ENCODE measurements at regions of chr6 and their contacts with region 1.

Region 1: GRCh38 chr6:24855395-24856245 is 56.9 kb upstream of the ARMH2 start:
- DNase-seq: peak; percentile 85
- H3K4me3 Mint-ChIP-seq: peak overlapping the region; percentile 36
- H3K27ac Mint-ChIP-seq: peak overlapping the region; percentile 95
- H3K4me1 Mint-ChIP-seq: peaks cover 56% of the 10 kb centered on the region
- H3K27me3 Mint-ChIP-seq: no peaks in the 10 kb centered on the region

Region 2: GRCh38 chr6:24844061-24844460 is 11.6 kb before region 1 on chr6:
- CTCF ChIA-PET with region 1: interaction called, 10 read pairs
- intact Hi-C with region 1: no loop called
- DNase-seq: no peak
- H3K4me3 Mint-ChIP-seq: no peak overlapping the region
- H3K27ac Mint-ChIP-seq: no peak overlapping the region
- H3K4me1 Mint-ChIP-seq: peaks cover 72% of the 10 kb centered on the region
- H3K27me3 Mint-ChIP-seq: no peaks in the 10 kb centered on the region

Region 3: DNA sequence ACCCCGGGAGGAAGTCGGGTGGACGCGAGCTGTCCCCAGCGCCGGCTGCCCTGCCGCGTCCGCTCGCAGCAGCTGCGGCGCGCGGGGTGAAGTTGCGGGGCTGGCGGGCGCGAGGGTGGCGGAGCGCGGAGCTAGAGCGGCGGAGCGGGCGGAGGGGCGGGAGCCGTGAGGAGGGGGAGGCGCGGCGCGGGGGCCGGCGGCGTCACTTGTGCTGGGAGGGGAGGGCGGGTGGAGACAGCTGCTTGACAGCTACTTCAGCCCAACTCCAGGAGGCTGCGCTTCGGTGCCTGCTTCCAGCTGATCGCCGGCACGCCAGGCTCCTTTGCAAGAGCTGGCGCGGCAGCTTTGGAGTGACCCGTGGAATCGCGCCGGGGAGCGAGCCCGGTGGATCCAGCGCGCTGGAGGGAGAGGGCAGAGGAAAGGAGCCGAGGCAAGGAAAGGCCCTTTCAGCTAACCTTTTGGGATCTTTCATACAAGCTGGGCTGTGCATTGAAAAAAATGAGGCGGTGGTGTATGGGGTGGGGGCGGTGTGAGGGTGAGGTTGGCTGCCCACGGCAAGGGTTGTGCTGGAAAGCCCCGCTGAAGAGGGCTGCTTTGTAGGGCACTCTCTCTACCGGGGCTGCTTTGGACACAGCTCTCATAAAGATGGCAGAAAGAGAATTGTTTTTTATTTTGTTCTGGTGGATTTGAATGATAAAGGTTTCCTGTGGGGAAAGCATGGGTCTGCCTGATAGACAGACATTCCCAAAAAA is 55.5 kb after region 1 on chr6:
- CTCF ChIA-PET with region 1: interaction called, 58 read pairs
- intact Hi-C with region 1: loop called (anchors 1 kb)
- DNase-seq: peak; percentile 70
- H3K4me3 Mint-ChIP-seq: peak overlapping the region; percentile 92
- H3K27ac Mint-ChIP-seq: peak overlapping the region; percentile 96
- H3K4me1 Mint-ChIP-seq: peaks cover 76% of the 10 kb centered on the region
- H3K27me3 Mint-ChIP-seq: no peaks in the 10 kb centered on the region

Region 4: DNA sequence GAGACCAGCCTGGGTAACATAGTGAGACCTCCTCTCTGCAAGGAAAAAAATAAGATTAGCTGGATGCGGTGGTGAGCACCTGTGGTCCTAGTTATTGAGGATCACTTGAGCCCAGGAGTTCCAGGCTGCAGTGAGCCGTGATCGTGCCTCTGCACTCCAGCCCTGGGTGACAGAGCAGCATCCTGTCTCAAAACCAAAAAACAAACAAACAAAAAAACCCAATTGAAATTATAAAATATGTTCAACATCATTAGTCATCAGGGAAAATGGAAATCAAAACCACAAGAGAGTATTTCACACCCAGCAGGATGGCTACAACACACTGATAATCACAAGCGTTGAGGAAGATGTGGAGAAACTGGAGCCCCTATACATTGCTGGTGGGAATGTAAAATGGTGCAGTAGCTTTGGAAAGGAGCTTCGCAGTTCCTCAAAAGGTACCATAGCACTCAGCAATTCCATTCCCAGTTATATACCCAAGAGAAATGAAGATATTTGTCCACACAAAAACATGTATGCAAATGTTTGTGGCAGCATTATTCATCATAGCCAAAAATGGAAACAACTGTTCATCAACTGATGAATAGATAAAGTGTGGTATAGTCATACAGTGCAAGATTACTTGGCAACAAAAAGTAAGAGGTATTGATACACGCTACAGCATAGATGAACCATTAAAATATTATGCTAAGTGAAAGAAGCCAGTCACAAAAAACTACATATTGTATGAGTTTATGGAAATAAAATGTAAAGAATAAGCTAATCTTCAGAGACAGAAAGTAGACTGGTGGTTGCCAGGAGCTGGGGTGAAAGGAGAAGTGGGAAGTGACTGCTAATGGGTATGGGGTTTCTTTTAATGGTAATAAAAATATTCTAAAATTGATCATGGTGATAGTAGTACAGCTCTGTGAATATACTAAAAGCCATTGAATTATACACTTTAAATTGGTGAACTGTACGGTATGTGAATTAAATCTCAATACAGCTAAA is 118.9 kb after region 1 on chr6:
- CTCF ChIA-PET with region 1: interaction called, 5 read pairs
- intact Hi-C with region 1: loop called (anchors 1 kb)
- DNase-seq: peak; percentile 59
- H3K4me3 Mint-ChIP-seq: peak overlapping the region; percentile 16
- H3K27ac Mint-ChIP-seq: peak overlapping the region; percentile 92
- H3K4me1 Mint-ChIP-seq: peaks cover 58% of the 10 kb centered on the region
- H3K27me3 Mint-ChIP-seq: no peaks in the 10 kb centered on the region

Region 5: DNA sequence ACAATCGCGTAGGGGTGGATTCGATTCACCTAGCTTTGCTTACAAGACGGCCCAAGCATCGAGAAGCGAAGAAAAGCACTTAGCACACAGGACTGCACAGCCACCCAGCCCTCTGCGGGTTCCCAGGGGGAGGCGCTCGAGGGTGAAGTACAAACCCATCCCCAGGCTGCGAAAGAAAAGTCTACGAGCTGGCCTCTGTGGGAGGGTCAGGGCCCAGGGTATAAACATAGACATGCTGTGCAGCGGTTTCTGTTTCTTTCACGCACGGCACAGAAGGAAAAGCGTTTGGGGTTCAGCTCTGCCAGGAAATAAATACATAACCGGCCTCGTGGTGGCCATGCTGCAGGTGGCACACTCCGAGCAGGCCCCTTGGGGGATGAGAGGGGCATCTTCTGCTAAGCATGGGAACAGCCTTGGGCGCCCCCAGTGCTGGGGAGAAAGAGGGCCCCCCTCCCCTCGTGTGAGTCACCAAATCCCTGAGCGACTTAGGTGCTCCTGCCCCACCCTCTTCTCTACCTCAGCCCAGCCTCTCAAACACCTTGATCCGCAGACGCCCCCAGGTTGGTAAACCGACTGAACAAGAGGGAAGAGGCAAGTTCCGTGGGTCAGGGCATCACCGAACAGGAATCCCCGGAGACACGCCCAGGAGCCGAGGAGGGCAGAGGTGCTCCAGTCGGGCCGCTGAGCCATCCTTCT is 171.7 kb after region 1 on chr6:
- CTCF ChIA-PET with region 1: interaction called, 13 read pairs
- intact Hi-C with region 1: no loop called
- DNase-seq: peak; percentile 90
- H3K4me3 Mint-ChIP-seq: peak overlapping the region; percentile 65
- H3K27ac Mint-ChIP-seq: peak overlapping the region; percentile 78
- H3K4me1 Mint-ChIP-seq: peaks cover 52% of the 10 kb centered on the region
- H3K27me3 Mint-ChIP-seq: no peaks in the 10 kb centered on the region

Region 6: GRCh38 chr6:25169553-25169952 is 313.9 kb after region 1 on chr6:
- CTCF ChIA-PET with region 1: no interaction called
- intact Hi-C with region 1: no loop called
- DNase-seq: no peak
- H3K4me3 Mint-ChIP-seq: no peak overlapping the region
- H3K27ac Mint-ChIP-seq: no peak overlapping the region
- H3K4me1 Mint-ChIP-seq: peaks cover 57% of the 10 kb centered on the region
- H3K27me3 Mint-ChIP-seq: no peaks in the 10 kb centered on the region